Heart left ventricle (tissue), 16 donors: ENCODE measurements at regions of chr12 and their contacts with region 1.

Region 1: DNA sequence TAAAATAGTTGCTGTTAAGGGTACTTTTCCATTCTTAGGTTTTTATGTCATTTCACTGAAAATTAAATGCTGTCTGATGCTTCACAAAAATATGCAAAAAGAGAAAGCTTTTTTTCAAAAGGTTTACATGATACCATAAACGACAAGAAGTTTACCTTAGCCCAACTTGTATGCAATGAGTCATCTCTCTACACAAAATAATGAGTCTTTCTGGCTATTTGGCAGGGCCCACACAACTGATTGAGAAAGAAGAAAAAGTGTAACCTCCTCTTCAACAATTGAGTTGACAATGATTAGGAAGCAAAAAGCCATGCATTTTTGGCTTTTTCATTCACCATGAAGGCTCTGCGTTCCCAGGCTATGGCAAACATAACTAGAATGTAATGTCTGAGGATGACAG is 165.4 kb upstream of the CPNE8 start:
- DNase-seq: no peak
- ATAC-seq: no peak
- H3K4me3 ChIP-seq: no peak overlapping the region
- H3K27ac ChIP-seq: no peak overlapping the region
- H3K4me1 ChIP-seq: no peaks in the 10 kb centered on the region
- H3K27me3 ChIP-seq: no peaks in the 10 kb centered on the region
- CTCF ChIP-seq: no peak
- POLR2A ChIP-seq: no peak

Region 2: DNA sequence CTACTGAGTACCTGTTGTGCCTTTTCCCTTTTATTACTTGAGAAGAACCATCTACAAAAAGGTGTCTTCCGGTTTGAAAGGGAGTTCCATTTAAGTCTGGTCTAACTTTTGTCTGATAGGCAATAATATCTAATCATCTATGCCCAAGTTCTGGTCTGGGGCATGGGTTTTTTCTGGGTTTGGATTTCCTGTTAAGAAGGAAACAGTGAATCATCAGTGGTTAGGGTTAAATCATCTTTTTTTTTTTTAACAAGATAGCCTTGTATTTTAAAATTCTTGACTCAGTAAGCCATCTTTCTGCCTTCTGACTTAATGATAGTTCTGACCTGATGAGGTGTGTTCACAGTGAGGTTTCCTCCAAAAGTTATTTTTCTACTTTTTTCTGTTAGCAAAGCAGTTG is 136.1 kb before region 1 on chr12:
- intact Hi-C with region 1: loop called in 1 of 10 experiments (anchors 10 kb)
- DNase-seq: no peak
- ATAC-seq: no peak
- H3K4me3 ChIP-seq: no peak overlapping the region
- H3K27ac ChIP-seq: no peak overlapping the region
- H3K4me1 ChIP-seq: no peaks in the 10 kb centered on the region
- H3K27me3 ChIP-seq: peaks cover 0 to 4% (median 0%) of the 10 kb centered on the region in 9 donors
- CTCF ChIP-seq: no peak
- POLR2A ChIP-seq: no peak

Region 3: GRCh38 chr12:39503445-39503844 is 432.7 kb after region 1 on chr12:
- intact Hi-C with region 1: no loop called
- DNase-seq: no peak
- ATAC-seq: no peak
- H3K4me3 ChIP-seq: no peak overlapping the region
- H3K27ac ChIP-seq: no peak overlapping the region
- H3K4me1 ChIP-seq: no peaks in the 10 kb centered on the region
- H3K27me3 ChIP-seq: no peaks in the 10 kb centered on the region
- CTCF ChIP-seq: no peak
- POLR2A ChIP-seq: no peak